ENCODE measurements at regions of chr2 and their contacts with region 1.

Region 1: GRCh38 chr2:216519154-216519762 is 20.6 kb downstream of the RPL37A start:
- DNase-seq: peak; percentile 51 to 89
- H3K4me3 ChIP-seq: no peak overlapping the region
- H3K27ac ChIP-seq: no peak overlapping the region
- H3K4me1 ChIP-seq: no peaks in the 10 kb centered on the region
- H3K27me3 ChIP-seq: no peaks in the 10 kb centered on the region
- CTCF ChIP-seq: peak; percentile 72 to 90 (median 83)
- POLR2A ChIP-seq: no peak

Region 2: GRCh38 chr2:216114714-216115557 is 404.3 kb before region 1 on chr2:
- intact Hi-C with region 1: no loop called
- DNase-seq: peak; percentile 96 to 99
- H3K4me3 ChIP-seq: peak overlapping the region; percentile 33 to 46
- H3K27ac ChIP-seq: peak overlapping the region; percentile 77 to 95
- H3K4me1 ChIP-seq: peaks cover 5 to 10% of the 10 kb centered on the region in 2 donors
- H3K27me3 ChIP-seq: no peaks in the 10 kb centered on the region
- CTCF ChIP-seq: peak; percentile 85 to 96 (median 90)
- POLR2A ChIP-seq: peak in 1 of 2 donors; percentile 59

Region 3: GRCh38 chr2:216666461-216667233 is 147.4 kb after region 1 on chr2:
- intact Hi-C with region 1: loop called (anchors 2 kb)
- DNase-seq: peak; percentile 75 to 83
- H3K4me3 ChIP-seq: no peak overlapping the region
- H3K27ac ChIP-seq: no peak overlapping the region
- H3K4me1 ChIP-seq: peaks cover 0 to 9% of the 10 kb centered on the region in 2 donors
- H3K27me3 ChIP-seq: no peaks in the 10 kb centered on the region
- CTCF ChIP-seq: peak; percentile 96 to 99 (median 98)
- POLR2A ChIP-seq: no peak